ENCODE measurements at regions of chr19 and their contacts with region 1.

Region 1: DNA sequence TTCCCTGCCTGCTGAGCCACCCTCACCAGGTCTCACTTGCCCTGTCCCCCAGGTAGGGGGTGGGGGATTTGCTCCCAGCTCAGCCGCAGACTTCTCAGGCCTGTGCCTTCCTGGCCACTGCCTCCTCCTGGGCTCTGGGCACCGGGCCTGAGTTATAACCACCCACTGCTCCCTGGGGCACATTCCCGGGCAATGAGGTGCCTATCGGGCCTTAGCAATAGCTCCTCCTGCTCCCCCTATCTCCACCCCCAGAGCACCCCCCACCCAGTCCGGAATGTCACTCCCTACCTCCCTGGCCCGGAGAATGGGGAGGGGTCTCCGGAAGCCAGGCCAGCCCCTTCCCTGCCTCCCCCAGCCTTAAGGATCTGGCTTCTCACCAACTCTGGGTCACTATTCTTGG is at the start of gene KLK5:
- DNase-seq: peak; percentile 75
- H3K4me3 ChIP-seq: peak within 1 kb of the TSS; percentile 52 to 73 (median 56)
- H3K27ac ChIP-seq: peak within 1 kb of the TSS; percentile 84
- H3K4me1 ChIP-seq: peaks cover 15% of the 10 kb centered on the region
- H3K27me3 ChIP-seq: no peaks in the 10 kb centered on the region
- CTCF ChIP-seq: peak in 1 of 2 donors; percentile 29
- total RNA-seq, gene KLK5: 485 to 1,207 TPM

Region 2: DNA sequence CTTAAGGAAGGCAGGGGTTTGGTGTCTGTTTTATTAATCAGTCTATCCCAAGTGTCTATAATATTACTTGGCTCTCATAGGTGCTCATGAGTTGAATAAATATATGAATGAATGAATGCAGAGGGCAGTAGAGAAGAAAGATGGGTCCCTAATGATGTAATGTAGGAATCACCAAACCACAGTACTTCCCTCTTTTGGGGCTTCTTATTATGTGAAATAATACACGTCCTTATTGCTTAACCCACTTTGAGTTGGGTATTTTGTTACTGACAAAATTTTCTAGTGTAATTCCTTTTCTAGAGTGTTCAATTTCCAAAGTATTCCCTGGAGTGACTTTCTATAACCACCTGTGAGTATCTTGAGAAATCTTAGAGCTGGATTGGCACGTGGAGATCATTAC is 13.3 kb before region 1 on chr19:
- CTCF ChIA-PET with region 1: no interaction called
- dilution Hi-C with region 1: no loop called
- in situ Hi-C with region 1: no loop called
- intact Hi-C with region 1: no loop called
- DNase-seq: no peak
- H3K4me3 ChIP-seq: no peak overlapping the region
- H3K27ac ChIP-seq: no peak overlapping the region
- H3K4me1 ChIP-seq: peaks cover 19% of the 10 kb centered on the region
- H3K27me3 ChIP-seq: no peaks in the 10 kb centered on the region
- CTCF ChIP-seq: no peak

Region 3: DNA sequence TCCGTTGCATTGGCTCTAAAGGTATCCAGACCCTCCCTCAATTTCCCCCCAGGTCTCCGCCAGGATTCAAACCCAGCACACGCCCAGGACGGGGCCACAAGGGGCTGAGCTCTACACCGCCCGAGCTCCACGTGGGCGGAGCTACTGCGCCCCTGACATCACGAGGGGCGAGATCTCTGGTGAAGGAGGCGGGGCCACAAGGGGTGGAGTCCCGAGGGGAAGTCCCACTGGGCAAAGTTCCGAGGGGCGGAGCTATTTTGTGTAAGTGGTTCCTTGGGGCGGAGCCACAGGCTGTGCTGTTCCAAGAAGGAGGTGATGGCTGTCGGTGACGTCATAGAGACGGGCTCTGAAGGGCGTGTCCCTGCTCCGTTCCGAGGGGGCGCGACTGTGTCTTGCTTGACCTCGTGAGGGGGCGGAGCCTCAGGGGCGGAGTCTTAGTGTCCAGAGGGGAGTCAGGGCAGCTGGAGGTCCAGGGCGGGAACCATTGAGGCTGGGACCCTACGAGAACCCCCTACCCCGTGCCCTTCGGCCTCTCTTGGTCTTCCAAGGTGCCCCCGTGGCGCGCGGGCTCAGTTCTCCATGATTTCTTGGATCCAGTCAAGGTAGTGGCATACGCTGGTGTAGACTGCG is 49.7 kb after region 1 on chr19:
- CTCF ChIA-PET with region 1: no interaction called
- dilution Hi-C with region 1: no loop called
- in situ Hi-C with region 1: no loop called
- intact Hi-C with region 1: loop called (anchors 1 kb)
- DNase-seq: peak; percentile 88
- H3K4me3 ChIP-seq: peak overlapping the region; percentile 36 to 69 (median 67)
- H3K27ac ChIP-seq: peak overlapping the region; percentile 84
- H3K4me1 ChIP-seq: peaks cover 47% of the 10 kb centered on the region
- H3K27me3 ChIP-seq: no peaks in the 10 kb centered on the region
- CTCF ChIP-seq: no peak

Region 4: DNA sequence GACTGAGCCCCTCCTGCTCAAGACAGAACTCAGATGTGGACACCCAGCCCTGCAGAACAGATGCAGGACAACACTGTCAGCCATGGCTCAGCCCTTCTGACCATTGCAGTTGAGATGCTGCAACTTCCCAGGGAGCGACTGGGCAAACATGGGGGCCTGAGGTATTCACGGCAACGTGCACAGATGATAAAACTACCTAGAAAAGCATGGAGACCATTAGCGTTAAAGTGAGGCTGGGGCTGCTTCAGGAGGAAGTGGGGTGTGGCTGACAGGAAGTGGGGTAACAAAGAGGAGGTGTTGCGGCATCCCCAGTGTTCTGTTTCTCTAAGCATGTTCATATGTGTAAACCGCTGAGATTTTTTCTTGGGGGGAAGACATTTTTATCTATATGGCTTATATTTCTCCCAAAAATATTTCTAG is 170.5 kb after region 1 on chr19:
- CTCF ChIA-PET with region 1: no interaction called
- dilution Hi-C with region 1: no loop called
- in situ Hi-C with region 1: no loop called
- intact Hi-C with region 1: no loop called
- DNase-seq: no peak
- H3K4me3 ChIP-seq: no peak overlapping the region
- H3K27ac ChIP-seq: no peak overlapping the region
- H3K4me1 ChIP-seq: peaks cover 5% of the 10 kb centered on the region
- H3K27me3 ChIP-seq: no peaks in the 10 kb centered on the region
- CTCF ChIP-seq: no peak

Measured in mammary epithelial cell (primary cell).